ENCODE measurements at regions of chr6 and their contacts with region 1.

Region 1: DNA sequence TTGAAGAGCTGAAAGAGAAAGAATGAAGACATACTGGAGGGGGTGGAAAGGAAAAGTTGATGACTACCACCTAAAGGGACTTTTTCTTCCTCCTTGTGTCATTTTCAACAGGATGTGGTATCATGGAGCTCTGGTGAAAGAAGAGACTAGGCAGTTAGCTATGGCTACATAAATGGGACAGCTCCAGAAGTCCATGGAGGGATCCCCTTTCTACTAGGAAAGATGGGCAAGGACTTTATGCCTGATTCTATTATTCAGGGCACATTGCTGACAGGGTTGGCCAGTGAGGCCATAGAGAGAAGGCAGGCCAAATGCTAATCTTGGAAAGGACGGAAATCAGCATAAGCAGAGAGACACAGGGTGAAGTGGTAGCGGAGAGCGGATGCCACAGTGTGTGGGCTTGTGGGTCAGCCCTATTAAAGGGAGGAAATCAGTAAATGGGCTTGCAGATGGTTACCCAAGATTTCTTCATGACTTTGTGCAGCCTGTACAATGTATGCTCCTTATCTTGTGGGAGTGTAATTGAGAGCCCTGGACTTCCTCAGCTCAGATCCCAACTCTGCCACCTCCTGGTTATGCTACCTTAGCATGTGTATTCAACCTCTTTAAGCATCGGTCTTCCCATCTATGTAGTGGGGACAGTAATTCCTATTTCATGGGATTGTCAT is 77.4 kb upstream of the TMEM170B start:
- DNase-seq: peak; percentile 19
- ATAC-seq: peak; percentile 70
- H3K4me3 Mint-ChIP-seq: peak overlapping the region; percentile 35
- H3K27ac Mint-ChIP-seq: peak overlapping the region; percentile 93
- H3K4me1 Mint-ChIP-seq: peaks cover 33% of the 10 kb centered on the region
- H3K27me3 Mint-ChIP-seq: peaks cover 4% of the 10 kb centered on the region

Region 2: DNA sequence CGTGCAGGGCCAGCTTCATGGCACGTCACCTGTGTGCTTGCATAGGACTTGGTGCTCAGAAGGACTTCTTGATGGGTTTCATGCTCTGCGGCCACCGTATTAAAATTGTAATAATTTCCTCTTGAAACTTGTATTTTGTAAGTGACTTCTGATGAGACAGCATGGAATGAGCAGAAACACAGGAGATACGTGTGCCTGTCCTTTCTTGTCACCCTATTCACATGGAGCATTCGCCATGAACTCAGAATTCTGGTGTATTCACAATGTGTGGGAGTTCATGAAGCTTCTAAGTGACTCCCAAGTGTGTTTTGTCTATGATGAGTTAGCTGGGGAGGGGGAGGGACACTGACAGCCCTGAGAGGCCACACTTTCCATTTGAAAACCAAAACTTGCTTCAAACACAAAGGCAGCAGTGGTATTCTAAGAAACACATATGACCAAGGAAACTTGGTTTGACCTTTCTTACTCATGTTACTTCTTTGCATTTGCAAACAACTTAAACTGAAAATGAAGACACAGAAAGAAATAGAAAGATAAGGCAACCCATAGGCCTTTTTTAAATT is 135.6 kb before region 1 on chr6:
- CTCF ChIA-PET with region 1: no interaction called
- POLR2A ChIA-PET with region 1: no interaction called
- intact Hi-C with region 1: loop called in 1 of 2 experiments (anchors 2 kb)
- DNase-seq: peak; percentile 77
- ATAC-seq: peak; percentile 93
- H3K4me3 Mint-ChIP-seq: peak overlapping the region; percentile 42
- H3K27ac Mint-ChIP-seq: peak overlapping the region; percentile 86
- H3K4me1 Mint-ChIP-seq: peaks cover 68% of the 10 kb centered on the region
- H3K27me3 Mint-ChIP-seq: no peaks in the 10 kb centered on the region

Region 3: DNA sequence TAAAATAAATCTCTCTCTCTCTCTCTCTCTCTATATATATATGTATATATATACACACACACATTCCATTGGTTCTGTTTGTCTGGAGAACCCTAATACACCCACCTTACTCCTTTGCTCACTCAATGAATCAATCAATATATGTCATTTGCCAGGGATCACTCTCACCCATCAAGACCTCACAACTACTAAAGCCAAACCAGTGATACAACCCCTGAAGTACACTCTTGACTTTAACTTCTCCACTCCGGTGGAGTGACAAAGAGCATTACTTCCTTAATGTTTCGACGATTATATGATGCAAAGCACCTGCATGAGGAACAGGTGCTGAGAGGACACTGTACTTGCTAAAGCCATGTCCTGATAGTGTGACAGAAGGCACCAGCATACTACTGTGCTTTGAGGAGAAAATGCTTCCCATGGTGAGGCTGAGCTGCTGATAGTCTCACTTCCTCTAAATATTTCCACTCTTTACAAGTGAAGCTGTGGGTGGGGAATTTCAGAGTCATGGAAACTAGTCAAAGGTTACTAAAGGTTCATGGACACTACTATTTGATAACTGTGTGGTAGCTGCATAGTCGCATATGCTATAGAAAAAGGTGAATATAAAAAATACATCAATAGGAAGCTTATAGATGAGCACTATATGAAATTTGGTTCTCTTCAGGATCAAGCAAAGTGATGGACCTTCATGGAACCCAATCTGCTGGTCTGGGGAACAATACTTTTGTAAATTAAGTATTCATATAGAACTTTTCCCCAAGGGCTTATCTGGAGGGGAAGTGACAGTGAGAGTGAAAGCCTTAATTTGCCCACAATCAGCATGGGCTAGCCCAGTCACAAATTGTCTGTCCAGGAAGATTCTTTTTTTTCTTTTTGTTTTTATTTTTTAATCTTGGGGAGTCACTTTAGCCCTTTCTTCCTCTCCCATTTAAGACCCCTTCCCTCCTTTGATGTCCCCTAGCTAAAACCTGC is 85.8 kb before region 1 on chr6:
- CTCF ChIA-PET with region 1: no interaction called
- POLR2A ChIA-PET with region 1: no interaction called
- intact Hi-C with region 1: loop called (anchors 2 to 5 kb)
- DNase-seq: peak; percentile 43
- ATAC-seq: peak; percentile 82
- H3K4me3 Mint-ChIP-seq: peak overlapping the region; percentile 30
- H3K27ac Mint-ChIP-seq: peak overlapping the region; percentile 72
- H3K4me1 Mint-ChIP-seq: peaks cover 65% of the 10 kb centered on the region
- H3K27me3 Mint-ChIP-seq: no peaks in the 10 kb centered on the region

Region 4: DNA sequence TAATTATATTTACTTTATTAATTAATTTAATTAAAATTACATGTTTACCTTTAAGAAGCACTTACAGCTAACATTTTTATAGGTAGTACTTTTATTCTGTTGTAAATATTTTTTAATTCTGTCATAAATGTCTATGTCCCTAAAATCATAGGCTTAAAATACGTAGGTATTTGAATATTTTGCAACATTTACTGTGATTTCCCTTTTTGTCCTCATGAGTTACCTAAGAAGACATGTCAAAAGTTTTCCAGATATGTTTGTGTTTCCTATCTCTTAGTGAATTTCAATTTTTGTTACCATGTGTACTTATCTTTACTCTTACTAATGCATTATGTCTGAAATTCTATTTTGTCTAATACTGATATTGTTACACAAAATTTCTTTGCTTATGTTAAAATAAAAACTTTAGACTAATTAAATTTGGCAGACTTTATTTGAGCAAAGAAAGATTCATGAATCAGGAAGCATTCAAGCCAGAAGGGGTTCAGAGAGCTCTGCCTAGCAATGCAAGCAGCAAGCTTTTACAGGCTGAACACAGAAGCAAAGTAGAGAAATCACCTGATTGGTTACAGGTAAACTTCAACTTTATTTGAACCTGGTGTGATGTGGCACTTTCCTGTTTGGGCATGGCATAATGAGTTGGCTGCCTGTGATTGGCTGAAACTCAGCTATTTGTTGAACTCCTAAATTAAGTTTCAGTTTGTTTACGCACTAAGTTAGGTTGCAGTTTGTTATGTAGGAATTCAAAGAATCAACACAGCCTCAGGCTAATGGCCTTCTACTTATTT is 45.8 kb before region 1 on chr6:
- CTCF ChIA-PET with region 1: interaction called, 4 read pairs
- POLR2A ChIA-PET with region 1: interaction called, 5 read pairs
- intact Hi-C with region 1: loop called in 1 of 2 experiments (anchors 5 kb)
- DNase-seq: peak; percentile 60
- ATAC-seq: peak; percentile 45
- H3K4me3 Mint-ChIP-seq: no peak overlapping the region
- H3K27ac Mint-ChIP-seq: peak overlapping the region; percentile 42
- H3K4me1 Mint-ChIP-seq: peaks cover 50% of the 10 kb centered on the region
- H3K27me3 Mint-ChIP-seq: no peaks in the 10 kb centered on the region

Region 5: GRCh38 chr6:11445146-11445545 is 15.0 kb before region 1 on chr6:
- CTCF ChIA-PET with region 1: interaction called, 11 read pairs
- POLR2A ChIA-PET with region 1: no interaction called
- intact Hi-C with region 1: loop called in 1 of 2 experiments (anchors 1 kb)
- DNase-seq: no peak
- ATAC-seq: no peak
- H3K4me3 Mint-ChIP-seq: no peak overlapping the region
- H3K27ac Mint-ChIP-seq: no peak overlapping the region
- H3K4me1 Mint-ChIP-seq: peaks cover 29% of the 10 kb centered on the region
- H3K27me3 Mint-ChIP-seq: peaks cover 2% of the 10 kb centered on the region

Region 6: DNA sequence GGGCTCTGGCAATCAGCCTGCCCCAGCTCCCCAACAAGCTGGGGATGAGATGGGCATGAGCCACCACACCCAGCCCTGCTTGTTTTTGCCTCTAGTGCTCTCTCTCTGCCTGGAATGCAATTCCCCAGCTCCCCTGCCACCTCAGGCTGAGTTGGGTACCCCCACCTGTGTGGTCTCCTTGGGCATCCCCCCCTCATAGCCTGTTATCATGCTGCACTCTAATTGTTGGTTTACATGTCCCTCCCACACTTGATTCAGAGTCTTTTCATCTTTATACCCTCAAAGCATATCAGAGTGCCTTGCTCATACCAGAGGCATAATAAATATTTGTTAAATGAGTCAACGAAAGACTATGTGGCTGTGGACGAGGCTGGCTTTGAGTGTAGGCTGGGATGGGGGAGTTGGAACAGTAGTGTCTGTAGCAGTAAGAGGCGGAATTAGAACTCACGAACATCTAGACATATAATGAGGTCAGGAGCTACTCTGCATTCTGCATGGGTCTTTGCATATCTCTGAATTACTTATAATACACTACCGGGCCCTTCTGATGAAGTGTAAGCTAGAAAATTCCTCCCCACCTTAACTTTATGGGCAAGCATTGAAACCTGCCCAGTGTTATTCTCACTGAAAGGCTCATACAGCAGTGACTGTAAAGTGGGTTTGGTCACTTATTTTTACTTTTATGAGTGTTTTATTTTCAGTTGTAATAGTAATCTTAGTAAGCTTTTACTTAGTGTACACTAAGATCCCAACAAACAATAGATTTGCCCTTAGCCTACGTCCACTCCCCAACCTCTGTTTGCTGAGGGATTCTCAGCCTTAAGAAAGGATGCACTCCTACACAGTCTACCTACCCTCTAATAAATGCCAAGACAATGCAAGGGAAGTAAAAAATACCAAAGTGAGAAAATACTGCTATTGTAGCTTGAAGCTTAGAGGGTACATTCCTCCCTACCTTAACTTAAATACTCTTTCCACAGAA is 888.7 kb after region 1 on chr6:
- CTCF ChIA-PET with region 1: no interaction called
- POLR2A ChIA-PET with region 1: no interaction called
- intact Hi-C with region 1: no loop called
- DNase-seq: no peak
- ATAC-seq: no peak
- H3K4me3 Mint-ChIP-seq: no peak overlapping the region
- H3K27ac Mint-ChIP-seq: no peak overlapping the region
- H3K4me1 Mint-ChIP-seq: no peaks in the 10 kb centered on the region
- H3K27me3 Mint-ChIP-seq: peaks cover 11% of the 10 kb centered on the region